PC-3 (cell line): ENCODE measurements at regions of chr12 and their contacts with region 1.

Region 1: GRCh38 chr12:51980051-51980808 is 26.5 kb upstream of the TAMALIN start:
- DNase-seq: peak; percentile 71
- ATAC-seq: peak; percentile 92
- H3K4me3 ChIP-seq: no peak overlapping the region
- H3K27ac ChIP-seq: no peak overlapping the region
- H3K4me1 ChIP-seq: no peaks in the 10 kb centered on the region
- H3K27me3 ChIP-seq: no peaks in the 10 kb centered on the region
- CTCF ChIP-seq: peak; percentile 95

Region 2: GRCh38 chr12:51891843-51892242 is 88.4 kb before region 1 on chr12:
- CTCF ChIA-PET with region 1: no interaction called
- POLR2A ChIA-PET with region 1: no interaction called
- intact Hi-C with region 1: loop called (anchors 1 kb)
- DNase-seq: peak; percentile 25
- ATAC-seq: no peak
- H3K4me3 ChIP-seq: no peak overlapping the region
- H3K27ac ChIP-seq: no peak overlapping the region
- H3K4me1 ChIP-seq: no peaks in the 10 kb centered on the region
- H3K27me3 ChIP-seq: no peaks in the 10 kb centered on the region
- CTCF ChIP-seq: peak; percentile 65

Region 3: GRCh38 chr12:51926718-51927117 is 53.5 kb before region 1 on chr12:
- CTCF ChIA-PET with region 1: no interaction called
- POLR2A ChIA-PET with region 1: no interaction called
- intact Hi-C with region 1: loop called (anchors 1 kb)
- DNase-seq: peak; percentile 69
- ATAC-seq: peak; percentile 77
- H3K4me3 ChIP-seq: no peak overlapping the region
- H3K27ac ChIP-seq: no peak overlapping the region
- H3K4me1 ChIP-seq: peaks cover 5% of the 10 kb centered on the region; the same call in 1 of the 2 replicates
- H3K27me3 ChIP-seq: no peaks in the 10 kb centered on the region
- CTCF ChIP-seq: peak; percentile 71

Region 4: GRCh38 chr12:52004042-52004648 is 23.9 kb after region 1 on chr12:
- CTCF ChIA-PET with region 1: no interaction called
- POLR2A ChIA-PET with region 1: no interaction called
- intact Hi-C with region 1: no loop called
- DNase-seq: peak; percentile 65
- ATAC-seq: peak; percentile 87
- H3K4me3 ChIP-seq: no peak overlapping the region
- H3K27ac ChIP-seq: no peak overlapping the region
- H3K4me1 ChIP-seq: no peaks in the 10 kb centered on the region
- H3K27me3 ChIP-seq: no peaks in the 10 kb centered on the region
- CTCF ChIP-seq: peak; percentile 78

Region 5: DNA sequence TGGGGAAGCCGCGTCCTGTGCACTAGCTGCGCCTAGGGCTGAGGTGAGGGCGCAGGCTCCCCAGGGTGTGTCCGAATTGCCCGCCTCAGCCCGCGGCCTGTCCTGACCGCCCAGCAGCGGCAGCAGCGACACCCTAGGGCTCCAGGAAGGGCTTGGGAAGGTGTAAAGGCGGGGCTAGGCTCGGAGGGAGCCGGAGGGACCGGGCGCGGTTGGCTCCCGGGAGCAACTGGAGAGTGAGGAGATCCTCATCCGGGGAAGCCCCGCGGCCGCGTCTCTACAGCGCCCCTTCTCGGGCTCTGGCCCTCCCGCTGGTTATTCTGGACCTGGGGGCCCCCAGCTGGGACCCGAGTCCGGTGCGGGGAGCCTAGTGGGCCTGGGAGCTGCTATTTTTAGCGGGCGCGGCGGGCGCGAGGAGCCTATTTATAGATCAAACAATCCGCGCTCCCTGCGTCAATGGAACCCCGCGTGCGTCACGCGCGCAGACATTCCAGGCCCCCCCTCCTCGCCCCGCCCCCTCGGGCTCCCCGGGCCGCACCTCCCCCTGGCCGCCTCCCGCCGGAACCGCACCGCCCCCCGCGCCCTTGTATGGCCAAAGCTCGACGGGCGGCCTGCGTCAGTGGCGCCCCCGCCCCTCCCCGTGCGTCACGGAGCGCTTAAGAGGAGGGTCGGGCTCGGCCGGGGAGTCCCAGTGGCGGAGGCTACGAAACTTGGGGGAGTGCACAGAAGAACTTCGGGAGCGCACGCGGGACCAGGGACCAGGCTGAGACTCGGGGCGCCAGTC is 70.7 kb after region 1 on chr12 and contains the start of gene NR4A1:
- CTCF ChIA-PET with region 1: no interaction called
- POLR2A ChIA-PET with region 1: no interaction called
- intact Hi-C with region 1: no loop called
- DNase-seq: peak; percentile 90
- ATAC-seq: peak; percentile 80
- H3K4me3 ChIP-seq: peak within 1 kb of the TSS; percentile 79
- H3K27ac ChIP-seq: peak within 1 kb of the TSS; percentile 93
- H3K4me1 ChIP-seq: peaks cover 23% of the 10 kb centered on the region
- H3K27me3 ChIP-seq: no peaks in the 10 kb centered on the region
- CTCF ChIP-seq: peak; percentile 25; the same call in 1 of the 2 replicates
- total RNA-seq, gene NR4A1: 90.7 and 110 TPM in 2 replicates

Region 6: DNA sequence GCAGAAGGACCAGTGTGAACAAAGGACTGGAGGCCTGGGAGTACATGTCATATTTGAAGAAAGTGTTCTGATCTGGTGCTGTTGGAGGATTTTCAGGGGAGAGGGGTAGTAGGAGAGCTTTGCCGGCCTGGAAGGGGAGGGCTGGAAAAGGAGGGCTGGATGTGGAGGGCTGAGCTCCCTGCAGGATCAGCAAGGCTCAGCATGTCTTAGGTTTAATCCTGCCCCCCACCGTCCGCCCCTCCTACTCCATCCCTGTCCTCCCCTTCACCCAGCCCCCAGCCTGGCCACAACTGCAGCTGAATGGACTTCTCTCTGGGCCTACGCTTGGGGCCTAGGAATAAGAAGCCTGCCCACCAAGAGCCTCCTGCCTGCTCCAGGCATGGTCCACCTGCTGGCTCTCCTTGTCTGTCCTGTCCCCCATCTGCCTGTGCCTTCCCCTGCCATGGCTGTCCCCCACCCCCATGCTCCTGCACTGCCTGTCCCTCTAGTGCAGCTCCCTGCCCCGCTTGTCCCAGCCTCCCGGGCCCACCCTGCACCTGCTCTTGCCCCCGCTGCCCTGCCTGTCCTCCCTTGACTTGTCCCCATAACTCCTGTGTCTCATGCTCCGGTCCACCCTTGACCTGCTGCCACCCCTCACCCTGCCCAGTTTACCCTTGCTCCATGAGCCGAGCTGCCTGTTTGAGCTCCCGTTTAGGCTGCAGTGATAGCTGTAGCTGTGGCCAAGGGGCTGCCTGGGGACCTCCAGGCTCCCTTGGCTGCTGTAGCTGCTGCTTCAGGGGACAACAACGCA is 1261.6 kb after region 1 on chr12:
- CTCF ChIA-PET with region 1: no interaction called
- POLR2A ChIA-PET with region 1: no interaction called
- intact Hi-C with region 1: no loop called
- DNase-seq: no peak
- ATAC-seq: no peak
- H3K4me3 ChIP-seq: no peak overlapping the region
- H3K27ac ChIP-seq: no peak overlapping the region
- H3K4me1 ChIP-seq: no peaks in the 10 kb centered on the region
- H3K27me3 ChIP-seq: no peaks in the 10 kb centered on the region
- CTCF ChIP-seq: no peak